Pancreas (tissue), 10 donors: ENCODE measurements at regions of chr1 and their contacts with region 1.

Region 1: DNA sequence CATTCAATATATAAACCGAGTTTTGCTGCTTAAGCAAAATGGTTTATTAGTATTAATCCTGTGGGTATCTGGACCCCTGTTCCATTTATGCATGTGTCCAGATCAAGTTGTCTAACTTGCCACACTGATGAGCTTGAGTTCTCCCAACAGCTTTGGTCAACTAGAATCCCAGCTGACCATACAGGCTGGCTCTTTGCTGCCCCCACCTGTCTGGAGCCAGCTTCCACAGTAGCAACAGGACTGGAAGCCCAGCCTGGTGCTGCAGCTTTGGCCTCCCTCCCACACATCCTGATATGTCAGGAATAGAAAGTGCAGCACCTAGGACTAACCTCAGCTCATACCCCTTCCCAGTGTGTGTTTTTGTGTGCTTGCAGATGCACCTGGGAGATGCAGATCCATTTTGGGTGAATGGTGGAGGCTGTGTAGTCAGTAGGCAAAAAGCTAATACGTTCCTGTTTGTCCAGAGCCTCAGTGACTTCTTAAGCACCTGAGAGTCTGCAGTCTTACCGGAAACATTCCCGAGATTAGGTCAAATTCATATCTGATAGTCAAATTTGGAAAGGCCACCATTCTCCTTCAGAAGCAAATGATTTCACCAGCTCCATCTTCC is 40.9 kb upstream of the BEND5 start:
- DNase-seq: peak; percentile 34 to 73 (median 58)
- ATAC-seq: peak; percentile 58 to 89 (median 86)
- H3K4me3 ChIP-seq: no peak overlapping the region
- H3K27ac ChIP-seq: no peak overlapping the region
- H3K4me1 ChIP-seq: no peaks in the 10 kb centered on the region
- H3K27me3 ChIP-seq: no peaks in the 10 kb centered on the region
- CTCF ChIP-seq: peak; percentile 43 to 70 (median 64)

Region 2: GRCh38 chr1:48677306-48678287 is 140.0 kb before region 1 on chr1:
- intact Hi-C with region 1: loop called in 1 of 3 experiments (anchors 5 kb)
- DNase-seq: peak; percentile 56 to 88 (median 76)
- ATAC-seq: peak; percentile 81 to 94 (median 86)
- H3K4me3 ChIP-seq: no peak overlapping the region
- H3K27ac ChIP-seq: no peak overlapping the region
- H3K4me1 ChIP-seq: peaks cover 0 to 4% (median 0%) of the 10 kb centered on the region in 3 donors
- H3K27me3 ChIP-seq: no peaks in the 10 kb centered on the region
- CTCF ChIP-seq: peak; percentile 49 to 60 (median 58)